HEK293 (cell line): ENCODE measurements at regions of chr9 and their contacts with region 1.

Region 1: DNA sequence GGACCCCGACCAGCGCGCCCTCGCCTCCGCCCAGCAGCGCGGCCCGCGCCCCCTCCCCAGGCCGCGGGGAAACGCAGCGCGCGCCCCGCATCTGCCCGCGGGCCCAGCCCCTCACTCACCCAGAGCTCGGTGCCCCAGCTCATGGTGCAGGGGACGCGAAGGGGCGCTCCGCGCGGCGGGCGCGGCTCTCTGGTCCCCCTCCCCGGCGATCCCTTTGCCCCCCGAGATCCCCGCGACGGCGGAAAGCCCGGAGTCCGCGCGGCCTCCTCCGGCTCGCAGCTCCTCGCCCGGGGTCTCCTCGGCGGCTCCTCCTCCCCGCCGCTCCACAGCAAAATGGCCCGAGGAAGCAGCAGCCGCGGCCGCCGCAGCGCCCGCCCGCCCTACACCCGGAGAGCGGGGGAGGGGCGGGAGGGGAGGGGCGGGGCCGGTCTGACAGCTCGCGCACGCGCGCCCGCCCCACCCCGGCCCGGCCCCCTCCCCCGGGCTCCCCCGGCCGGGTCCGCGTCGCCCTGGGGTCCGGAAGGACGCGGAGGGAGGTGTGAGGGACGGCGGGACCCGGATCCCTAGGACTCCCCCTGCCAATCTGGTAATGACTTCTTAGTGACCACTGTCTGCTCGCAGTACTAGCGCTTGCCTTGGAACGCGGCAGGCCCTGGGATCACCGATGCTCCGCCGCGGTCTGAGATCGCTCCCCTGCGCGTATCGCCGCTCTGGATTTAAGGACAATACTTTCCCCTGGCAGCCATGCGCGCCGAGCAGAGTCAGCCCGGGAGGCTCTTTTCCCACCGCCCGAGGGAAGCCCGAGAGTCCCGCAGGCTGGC is at the start of gene FNBP1:
- H3K4me3 ChIP-seq: peak within 1 kb of the TSS; percentile 57
- H3K27ac ChIP-seq: peak within 1 kb of the TSS; percentile 84; the same call in 1 of the 2 replicates
- H3K4me1 ChIP-seq: peaks cover 9% of the 10 kb centered on the region
- CTCF ChIP-seq: peak; percentile 43; the same call in 1 of the 2 replicates

Region 2: GRCh38 chr9:129884220-129885017 is 158.6 kb before region 1 on chr9:
- CTCF ChIA-PET with region 1: interaction called, 29 read pairs
- POLR2A ChIA-PET with region 1: interaction called, 5 read pairs
- H3K4me3 ChIP-seq: no peak overlapping the region
- H3K27ac ChIP-seq: no peak overlapping the region
- H3K4me1 ChIP-seq: no peaks in the 10 kb centered on the region; the same call in 1 of the 2 replicates
- CTCF ChIP-seq: peak; percentile 39; the same call in 1 of the 2 replicates

Region 3: GRCh38 chr9:130053504-130054324 is 10.7 kb after region 1 on chr9 and contains the start of gene GPR107:
- CTCF ChIA-PET with region 1: interaction called, 7 read pairs
- POLR2A ChIA-PET with region 1: interaction called, 42 read pairs
- H3K4me3 ChIP-seq: peak within 1 kb of the TSS; percentile 91
- H3K27ac ChIP-seq: peak within 1 kb of the TSS; percentile 79
- H3K4me1 ChIP-seq: no peaks in the 10 kb centered on the region; the same call in 1 of the 2 replicates
- CTCF ChIP-seq: no peak